Activated CD4-positive, alpha-beta memory T cell treated with anti-CD3 and anti-CD28 coated beads for 36 hours (primary cell): ENCODE measurements at regions of chr17 and their contacts with region 1.

Region 1: DNA sequence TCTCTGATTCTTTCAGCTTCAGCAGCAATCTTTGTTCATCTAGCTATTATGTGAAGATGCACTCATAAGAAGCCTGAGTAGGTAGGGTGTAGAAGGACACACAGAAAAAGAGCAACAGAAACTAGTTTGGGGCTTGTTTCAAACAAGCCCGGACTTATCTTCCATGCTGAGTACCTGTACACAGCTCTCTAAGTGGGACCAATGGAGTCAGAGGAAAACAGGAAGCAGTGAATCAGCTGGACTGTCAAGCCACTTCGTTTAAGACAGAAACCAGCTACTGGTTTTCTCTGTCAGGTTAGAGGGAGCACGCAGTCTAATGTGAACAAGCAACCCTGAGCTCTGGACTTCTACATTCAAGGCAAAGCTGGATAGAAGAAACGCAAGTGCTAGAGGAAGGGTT is 16.0 kb downstream of the MAP2K6 start:
- DNase-seq: no peak
- H3K4me3 Mint-ChIP-seq: no peak overlapping the region
- H3K27ac Mint-ChIP-seq: peak overlapping the region; percentile 29
- H3K4me1 Mint-ChIP-seq: peaks cover 32% of the 10 kb centered on the region
- H3K27me3 Mint-ChIP-seq: no peaks in the 10 kb centered on the region

Region 2: GRCh38 chr17:69404382-69404781 is 26.1 kb before region 1 on chr17:
- CTCF ChIA-PET with region 1: no interaction called
- POLR2A ChIA-PET with region 1: no interaction called
- intact Hi-C with region 1: no loop called
- DNase-seq: no peak
- H3K4me3 Mint-ChIP-seq: no peak overlapping the region
- H3K27ac Mint-ChIP-seq: no peak overlapping the region
- H3K4me1 Mint-ChIP-seq: no peaks in the 10 kb centered on the region
- H3K27me3 Mint-ChIP-seq: peaks cover 5% of the 10 kb centered on the region

Region 3: GRCh38 chr17:69445132-69445531 is 14.6 kb after region 1 on chr17:
- CTCF ChIA-PET with region 1: no interaction called
- POLR2A ChIA-PET with region 1: no interaction called
- intact Hi-C with region 1: loop called (anchors 2 kb)
- DNase-seq: no peak
- H3K4me3 Mint-ChIP-seq: no peak overlapping the region
- H3K27ac Mint-ChIP-seq: no peak overlapping the region
- H3K4me1 Mint-ChIP-seq: peaks cover 10% of the 10 kb centered on the region
- H3K27me3 Mint-ChIP-seq: no peaks in the 10 kb centered on the region